CD8-positive, alpha-beta T cell (primary cell): ENCODE measurements at regions of chr7 and their contacts with region 1.

Region 1: DNA sequence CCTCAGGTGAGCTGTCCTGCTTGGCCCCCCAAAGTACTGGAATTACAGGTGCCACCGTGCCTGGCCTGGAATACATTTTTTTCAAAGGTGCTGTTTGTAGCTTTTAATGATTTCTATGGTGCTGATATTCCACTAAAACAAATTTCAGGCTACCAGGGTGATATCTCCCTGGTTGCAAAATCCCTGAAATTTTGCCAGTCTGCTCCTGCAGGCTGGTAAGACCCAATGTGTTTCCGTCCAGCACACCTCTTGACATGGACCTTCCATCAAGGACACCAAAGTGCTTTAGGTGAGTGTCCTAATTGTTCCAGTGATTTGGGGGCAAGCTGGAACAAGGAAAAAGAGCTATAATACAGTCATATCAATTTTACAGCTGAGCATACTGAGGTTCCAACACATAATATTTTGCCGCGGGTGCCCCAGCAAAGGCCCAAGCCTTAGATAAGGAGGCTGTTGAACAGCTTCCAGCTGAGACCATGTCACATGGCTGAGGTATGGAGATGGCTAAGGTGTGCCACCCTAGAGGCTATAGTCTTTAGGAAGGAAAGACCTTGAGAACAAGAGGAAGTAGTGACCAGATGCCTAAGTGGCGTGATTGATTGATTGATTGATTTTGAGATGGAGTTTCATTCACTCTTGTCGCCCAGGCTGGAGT is 69.9 kb upstream of the KMT2C start:
- DNase-seq: no peak
- ATAC-seq: no peak
- H3K4me3 ChIP-seq: no peak overlapping the region
- H3K4me3 Mint-ChIP-seq: no peak overlapping the region
- H3K27ac ChIP-seq: no peak overlapping the region
- H3K27ac Mint-ChIP-seq: no peak overlapping the region
- H3K4me1 ChIP-seq: no peaks in the 10 kb centered on the region
- H3K4me1 Mint-ChIP-seq: no peaks in the 10 kb centered on the region
- H3K27me3 ChIP-seq: no peaks in the 10 kb centered on the region
- H3K27me3 Mint-ChIP-seq: no peaks in the 10 kb centered on the region
- CTCF ChIP-seq: no peak

Region 2: DNA sequence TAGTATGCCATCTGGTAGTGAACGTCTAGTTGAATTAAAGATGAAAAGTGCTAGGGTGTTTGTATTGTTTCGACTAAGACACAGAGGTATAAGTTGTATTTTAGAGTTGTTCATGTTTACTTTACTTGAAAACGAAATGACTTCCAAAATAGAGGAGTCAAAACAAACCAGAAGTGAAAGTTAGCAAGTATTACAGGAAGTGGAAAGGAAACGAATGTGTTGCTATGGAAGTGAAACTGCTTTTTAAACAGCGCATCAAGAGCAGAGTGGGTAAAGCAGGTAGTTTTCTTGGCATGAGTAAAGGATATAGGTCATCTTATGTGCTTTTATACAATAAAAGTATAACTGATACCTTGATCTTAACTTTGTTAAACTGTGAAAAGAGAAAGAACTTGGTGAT is 569.5 kb before region 1 on chr7:
- CTCF ChIA-PET with region 1: no interaction called
- POLR2A ChIA-PET with region 1: no interaction called
- intact Hi-C with region 1: no loop called
- DNase-seq: peak in 2 of 9 experiments; percentile 61 to 81
- ATAC-seq: peak; percentile 91
- H3K4me3 ChIP-seq: peak overlapping the region; percentile 4 to 24
- H3K4me3 Mint-ChIP-seq: peak overlapping the region; percentile 80
- H3K27ac ChIP-seq: peak overlapping the region; percentile 54 to 77
- H3K27ac Mint-ChIP-seq: peak overlapping the region; percentile 96
- H3K4me1 ChIP-seq: peaks cover 15% of the 10 kb centered on the region
- H3K4me1 Mint-ChIP-seq: peaks cover 17% of the 10 kb centered on the region
- H3K27me3 ChIP-seq: peaks cover 0 to 3% of the 10 kb centered on the region in 2 experiments
- H3K27me3 Mint-ChIP-seq: no peaks in the 10 kb centered on the region
- CTCF ChIP-seq: no peak

Region 3: DNA sequence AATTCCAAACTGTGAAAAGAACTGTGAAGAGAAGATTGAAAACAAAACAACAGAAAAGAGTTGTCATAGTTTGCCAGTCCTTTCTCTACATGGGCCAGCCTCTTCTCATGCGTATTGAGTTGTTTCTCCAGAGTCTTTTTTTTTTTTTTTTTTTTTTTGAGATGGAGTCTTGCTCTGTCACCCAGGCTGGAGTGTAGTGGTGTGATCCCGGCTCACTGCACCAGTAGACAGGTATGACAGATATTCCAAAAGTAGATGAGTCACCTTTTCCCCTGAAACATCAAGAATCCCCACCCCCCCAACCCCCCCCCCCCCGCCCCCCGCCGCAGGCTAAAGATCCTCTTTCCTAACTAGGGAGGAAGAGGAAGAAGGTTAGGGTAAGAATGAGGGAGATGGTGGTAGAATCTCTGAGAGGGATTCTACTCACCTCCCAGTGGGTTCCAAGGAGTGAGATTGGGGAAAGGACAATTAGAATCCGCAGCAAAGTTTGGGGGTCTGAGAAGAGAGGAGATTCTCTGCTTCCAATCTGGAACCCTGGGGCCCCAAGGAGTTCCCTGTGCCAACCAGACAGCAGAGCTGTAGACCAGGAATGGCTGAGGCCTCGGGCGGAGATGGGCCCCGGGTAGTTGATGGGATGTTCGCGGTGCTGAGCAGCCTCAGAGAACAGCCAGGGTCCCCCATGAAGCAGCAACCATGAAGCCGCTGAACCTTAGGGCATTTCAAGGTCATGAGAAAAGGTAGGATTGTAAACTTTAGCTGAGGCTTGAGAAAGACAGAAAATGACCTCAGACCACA is 54.2 kb before region 1 on chr7:
- CTCF ChIA-PET with region 1: no interaction called
- POLR2A ChIA-PET with region 1: no interaction called
- intact Hi-C with region 1: no loop called
- DNase-seq: no peak
- ATAC-seq: no peak
- H3K4me3 ChIP-seq: no peak overlapping the region
- H3K4me3 Mint-ChIP-seq: no peak overlapping the region
- H3K27ac ChIP-seq: no peak overlapping the region
- H3K27ac Mint-ChIP-seq: no peak overlapping the region
- H3K4me1 ChIP-seq: no peaks in the 10 kb centered on the region
- H3K4me1 Mint-ChIP-seq: peaks cover 4% of the 10 kb centered on the region
- H3K27me3 ChIP-seq: no peaks in the 10 kb centered on the region
- H3K27me3 Mint-ChIP-seq: no peaks in the 10 kb centered on the region
- CTCF ChIP-seq: no peak

Region 4: DNA sequence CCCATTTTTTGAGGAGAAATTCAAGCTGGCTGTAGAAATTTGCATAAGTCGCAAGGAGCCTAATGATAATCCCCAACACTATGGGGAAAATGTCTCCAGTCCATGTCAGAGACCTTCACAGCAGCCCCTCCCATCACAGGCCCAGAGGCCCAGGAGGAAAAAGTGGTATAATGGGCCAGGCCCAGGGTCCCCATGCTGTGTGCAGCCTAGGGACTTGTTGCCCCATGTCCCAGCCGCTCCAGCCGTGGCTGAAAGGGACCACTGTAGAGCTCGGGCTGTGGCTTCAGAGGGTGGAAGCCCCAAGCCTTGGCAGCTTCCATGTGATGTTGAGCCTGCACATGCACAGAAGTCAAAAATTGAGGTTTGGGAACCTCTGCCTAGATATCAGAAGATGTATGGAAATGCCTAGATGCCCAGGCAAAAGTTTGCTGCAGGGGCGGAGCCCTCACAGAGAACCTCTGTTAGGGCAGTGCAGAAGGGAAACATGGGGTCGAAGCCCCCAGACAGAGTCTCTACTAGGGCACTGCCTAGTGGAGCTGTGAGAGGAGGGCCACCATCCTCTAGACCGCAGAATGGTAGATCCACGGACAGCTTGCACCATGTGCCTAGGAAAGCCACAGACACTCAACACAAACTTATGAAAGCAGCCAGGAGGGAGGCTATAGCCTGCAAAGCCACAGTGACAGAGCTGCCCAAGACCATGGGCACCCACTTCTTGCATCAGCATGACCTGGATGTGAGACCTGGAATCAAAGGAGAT is 34.5 kb before region 1 on chr7:
- CTCF ChIA-PET with region 1: no interaction called
- POLR2A ChIA-PET with region 1: no interaction called
- intact Hi-C with region 1: loop called in 1 of 2 experiments (anchors 5 kb)
- DNase-seq: no peak
- ATAC-seq: no peak
- H3K4me3 ChIP-seq: no peak overlapping the region
- H3K4me3 Mint-ChIP-seq: no peak overlapping the region
- H3K27ac ChIP-seq: no peak overlapping the region
- H3K27ac Mint-ChIP-seq: no peak overlapping the region
- H3K4me1 ChIP-seq: no peaks in the 10 kb centered on the region
- H3K4me1 Mint-ChIP-seq: no peaks in the 10 kb centered on the region
- H3K27me3 ChIP-seq: no peaks in the 10 kb centered on the region
- H3K27me3 Mint-ChIP-seq: no peaks in the 10 kb centered on the region
- CTCF ChIP-seq: no peak